ENCODE measurements at regions of chr5 and their contacts with region 1.

Region 1: GRCh38 chr5:122492664-122493063 is 180.6 kb downstream of the SNCAIP start:
- DNase-seq: peak; percentile 37
- H3K4me3 Mint-ChIP-seq: no peak overlapping the region
- H3K27ac Mint-ChIP-seq: no peak overlapping the region
- H3K4me1 Mint-ChIP-seq: peaks cover 12% of the 10 kb centered on the region
- H3K27me3 Mint-ChIP-seq: no peaks in the 10 kb centered on the region
- CTCF ChIP-seq: peak; percentile 44

Region 2: GRCh38 chr5:122192497-122193496 is 299.9 kb before region 1 on chr5:
- CTCF ChIA-PET with region 1: interaction called, 11 read pairs
- intact Hi-C with region 1: loop called (anchors 1 kb)
- DNase-seq: peak; percentile 62
- H3K4me3 Mint-ChIP-seq: no peak overlapping the region
- H3K27ac Mint-ChIP-seq: no peak overlapping the region
- H3K4me1 Mint-ChIP-seq: no peaks in the 10 kb centered on the region
- H3K27me3 Mint-ChIP-seq: peaks cover 3% of the 10 kb centered on the region
- CTCF ChIP-seq: peak; percentile 65

Region 3: GRCh38 chr5:122311961-122312590 is 180.6 kb before region 1 on chr5 and contains the start of gene SNCAIP:
- CTCF ChIA-PET with region 1: interaction called, 3 read pairs
- intact Hi-C with region 1: loop called (anchors 5 kb)
- DNase-seq: peak; percentile 60
- H3K4me3 Mint-ChIP-seq: peak within 1 kb of the TSS; percentile 75
- H3K27ac Mint-ChIP-seq: no peak within 1 kb of the TSS
- H3K4me1 Mint-ChIP-seq: peaks cover 13% of the 10 kb centered on the region
- H3K27me3 Mint-ChIP-seq: peaks cover 71% of the 10 kb centered on the region
- CTCF ChIP-seq: no peak
- total RNA-seq, gene SNCAIP: 0.22 TPM in 1 of 2 replicates, not detected in the other

Region 4: GRCh38 chr5:122400938-122401337 is 91.7 kb before region 1 on chr5:
- CTCF ChIA-PET with region 1: no interaction called
- intact Hi-C with region 1: no loop called
- DNase-seq: no peak
- H3K4me3 Mint-ChIP-seq: no peak overlapping the region
- H3K27ac Mint-ChIP-seq: no peak overlapping the region
- H3K4me1 Mint-ChIP-seq: peaks cover 17% of the 10 kb centered on the region
- H3K27me3 Mint-ChIP-seq: no peaks in the 10 kb centered on the region
- CTCF ChIP-seq: no peak

Region 5: DNA sequence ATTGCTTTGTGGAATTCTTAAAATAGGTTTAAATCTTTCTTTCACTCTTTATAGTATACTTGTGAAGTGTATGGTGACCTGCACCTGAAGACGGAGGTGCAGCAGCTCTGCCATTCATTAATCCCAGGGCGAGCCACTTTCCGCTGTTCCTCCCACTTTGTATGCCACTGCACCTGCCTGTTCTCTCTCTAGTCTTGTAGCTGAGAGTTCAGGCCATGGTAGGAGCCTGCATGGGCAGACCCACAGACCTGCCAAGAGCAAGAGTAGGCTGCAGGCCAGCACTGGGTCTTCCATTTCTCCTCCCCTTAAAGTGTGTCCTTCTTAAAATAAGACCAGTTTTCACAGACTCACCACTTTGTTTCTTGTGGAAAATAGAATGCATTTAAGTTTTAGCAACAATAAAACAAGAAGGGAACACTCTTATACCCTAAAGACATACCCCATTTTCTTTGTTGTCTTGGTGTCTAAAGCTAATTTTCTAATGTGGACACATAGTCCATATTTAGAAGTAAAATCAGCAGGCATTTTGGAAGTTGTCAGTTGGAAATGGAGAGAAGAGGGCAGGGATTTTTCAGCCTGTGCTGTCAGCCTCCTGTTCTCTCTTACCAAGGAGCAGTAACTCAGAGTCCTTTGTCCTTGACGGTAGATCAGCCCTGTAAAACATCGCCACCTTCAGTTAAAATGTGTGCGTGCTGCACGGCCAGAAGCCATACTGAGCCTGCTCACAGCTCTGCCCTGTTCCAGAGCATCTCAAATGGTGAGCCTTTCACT is 77.4 kb before region 1 on chr5:
- CTCF ChIA-PET with region 1: interaction called, 3 read pairs
- intact Hi-C with region 1: loop called (anchors 5 kb)
- DNase-seq: peak; percentile 63
- H3K4me3 Mint-ChIP-seq: no peak overlapping the region
- H3K27ac Mint-ChIP-seq: no peak overlapping the region
- H3K4me1 Mint-ChIP-seq: peaks cover 20% of the 10 kb centered on the region
- H3K27me3 Mint-ChIP-seq: peaks cover 36% of the 10 kb centered on the region
- CTCF ChIP-seq: peak; percentile 62

Region 6: GRCh38 chr5:122458278-122458872 is 34.3 kb before region 1 on chr5:
- CTCF ChIA-PET with region 1: no interaction called
- intact Hi-C with region 1: loop called (anchors 1 kb)
- DNase-seq: peak; percentile 36
- H3K4me3 Mint-ChIP-seq: no peak overlapping the region
- H3K27ac Mint-ChIP-seq: no peak overlapping the region
- H3K4me1 Mint-ChIP-seq: peaks cover 9% of the 10 kb centered on the region
- H3K27me3 Mint-ChIP-seq: no peaks in the 10 kb centered on the region
- CTCF ChIP-seq: peak; percentile 55

Measured in Calu3 (cell line).